Left lung (tissue), 14 donors: ENCODE measurements at regions of chr1 and their contacts with region 1.

Region 1: DNA sequence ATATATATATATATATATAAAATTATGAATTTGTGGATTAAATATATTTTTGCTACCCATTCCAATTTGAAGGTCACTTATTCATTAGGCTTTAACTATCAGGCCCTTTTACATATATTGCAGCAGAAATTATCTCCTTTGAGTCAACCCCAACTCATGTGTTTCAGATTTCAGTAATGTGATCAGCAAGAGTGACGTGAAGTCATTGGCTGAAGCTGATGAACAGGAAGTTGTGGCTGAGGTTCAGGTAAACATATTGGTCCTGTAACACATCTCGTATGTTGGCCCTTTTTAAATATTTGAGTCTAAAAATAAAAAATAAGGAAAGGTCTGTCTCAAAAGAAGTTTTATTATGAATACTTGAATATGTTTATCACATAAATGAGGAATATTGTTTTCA is 8.5 kb downstream of the VPS45 start:
- DNase-seq: no peak
- ATAC-seq: no peak
- H3K4me3 ChIP-seq: no peak overlapping the region
- H3K27ac ChIP-seq: no peak overlapping the region
- H3K4me1 ChIP-seq: no peaks in the 10 kb centered on the region
- H3K27me3 ChIP-seq: no peaks in the 10 kb centered on the region
- CTCF ChIP-seq: no peak

Region 2: DNA sequence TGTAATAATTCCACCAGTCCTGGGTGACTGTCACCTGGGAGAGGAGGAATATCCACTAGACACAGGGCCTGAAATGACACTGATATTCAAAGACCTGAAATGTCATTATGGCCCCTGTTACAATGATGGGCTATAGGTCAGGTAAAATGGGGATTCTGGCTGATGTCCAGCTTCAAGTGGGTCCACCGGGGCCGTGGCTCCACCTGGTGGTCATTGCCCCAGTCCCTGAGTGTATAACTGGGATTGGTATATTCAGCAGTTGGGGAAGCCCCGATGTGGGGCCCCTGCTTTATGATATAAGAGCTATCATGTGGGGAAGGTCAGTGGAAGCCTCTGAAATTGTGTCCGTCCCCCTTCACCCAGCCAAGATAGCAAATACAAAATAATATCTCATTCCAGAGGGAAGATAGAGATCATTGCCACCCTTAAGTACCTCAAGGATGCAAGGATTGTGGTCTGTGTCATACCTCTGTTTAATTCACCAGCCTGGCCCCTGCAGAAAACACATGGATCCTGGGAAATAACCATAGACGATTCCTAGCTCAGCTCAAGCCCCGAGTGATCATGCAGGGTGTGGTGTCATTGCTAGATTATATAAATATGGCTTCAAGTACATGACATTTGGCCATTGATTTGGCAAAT is 93.0 kb after region 1 on chr1:
- intact Hi-C with region 1: loop called in 1 of 2 experiments (anchors 5 kb)
- DNase-seq: peak in 3 of 4 donors; percentile 55 to 90 (median 71)
- ATAC-seq: peak; percentile 68
- H3K4me3 ChIP-seq: no peak overlapping the region
- H3K27ac ChIP-seq: no peak overlapping the region
- H3K4me1 ChIP-seq: peaks cover 0 to 27% of the 10 kb centered on the region in 2 donors
- H3K27me3 ChIP-seq: no peaks in the 10 kb centered on the region
- CTCF ChIP-seq: peak; percentile 60 to 74